H1 (cell line): ENCODE measurements at regions of chr2 and their contacts with region 1.

Region 1: GRCh38 chr2:142980561-142981378 is 103.3 kb downstream of the KYNU start:
- DNase-seq: no peak
- H3K4me3 ChIP-seq: no peak overlapping the region
- H3K27ac ChIP-seq: no peak overlapping the region
- H3K4me1 ChIP-seq: peaks cover 0 to 3% (median 0%) of the 10 kb centered on the region in 4 experiments; a peak in 1 of 7 replicates
- H3K27me3 ChIP-seq: no peaks in the 10 kb centered on the region
- CTCF ChIP-seq: peak in 1 of 3 experiments; percentile 18; a peak in 2 of 4 replicates
- EP300 ChIP-seq: no peak
- POLR2A ChIP-seq: no peak
- RAD21 ChIP-seq: peak; percentile 50 to 64

Region 2: DNA sequence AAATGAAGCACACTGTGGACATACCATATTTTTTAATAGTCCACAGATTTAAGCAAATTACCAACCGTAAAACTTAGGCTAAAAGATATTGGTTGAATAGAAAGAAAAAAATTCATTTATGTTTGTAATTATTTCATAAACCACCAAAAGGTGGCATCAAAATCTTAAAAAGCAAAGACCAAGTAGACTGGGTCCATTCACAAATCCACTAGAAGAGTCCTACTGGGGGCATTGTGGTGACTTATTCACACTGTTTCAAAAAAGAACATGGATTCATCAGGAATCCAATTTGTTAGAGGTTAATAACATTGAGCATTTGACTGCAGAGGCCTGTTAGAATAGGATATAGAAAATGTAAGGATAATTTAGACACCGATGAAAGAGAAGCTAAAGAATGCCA is 298.2 kb before region 1 on chr2:
- CTCF ChIA-PET with region 1: interaction called, 15 read pairs
- POLR2A ChIA-PET with region 1: no interaction called
- DNase-seq: no peak
- H3K4me3 ChIP-seq: no peak overlapping the region
- H3K27ac ChIP-seq: no peak overlapping the region
- H3K4me1 ChIP-seq: no peaks in the 10 kb centered on the region
- H3K27me3 ChIP-seq: no peaks in the 10 kb centered on the region
- CTCF ChIP-seq: no peak; a peak in 1 of 4 replicates
- EP300 ChIP-seq: no peak
- POLR2A ChIP-seq: no peak
- RAD21 ChIP-seq: peak; percentile 29 to 31